ENCODE measurements at regions of chrX and their contacts with region 1.

Region 1: GRCh38 chrX:75273483-75273882 is 402 bp upstream of the UPRT start:
- DNase-seq: no peak
- ATAC-seq: no peak
- H3K4me3 Mint-ChIP-seq: peak overlapping the region; percentile 95
- H3K27ac Mint-ChIP-seq: peak overlapping the region; percentile 97
- H3K4me1 Mint-ChIP-seq: peaks cover 26% of the 10 kb centered on the region
- H3K27me3 Mint-ChIP-seq: no peaks in the 10 kb centered on the region

Region 2: DNA sequence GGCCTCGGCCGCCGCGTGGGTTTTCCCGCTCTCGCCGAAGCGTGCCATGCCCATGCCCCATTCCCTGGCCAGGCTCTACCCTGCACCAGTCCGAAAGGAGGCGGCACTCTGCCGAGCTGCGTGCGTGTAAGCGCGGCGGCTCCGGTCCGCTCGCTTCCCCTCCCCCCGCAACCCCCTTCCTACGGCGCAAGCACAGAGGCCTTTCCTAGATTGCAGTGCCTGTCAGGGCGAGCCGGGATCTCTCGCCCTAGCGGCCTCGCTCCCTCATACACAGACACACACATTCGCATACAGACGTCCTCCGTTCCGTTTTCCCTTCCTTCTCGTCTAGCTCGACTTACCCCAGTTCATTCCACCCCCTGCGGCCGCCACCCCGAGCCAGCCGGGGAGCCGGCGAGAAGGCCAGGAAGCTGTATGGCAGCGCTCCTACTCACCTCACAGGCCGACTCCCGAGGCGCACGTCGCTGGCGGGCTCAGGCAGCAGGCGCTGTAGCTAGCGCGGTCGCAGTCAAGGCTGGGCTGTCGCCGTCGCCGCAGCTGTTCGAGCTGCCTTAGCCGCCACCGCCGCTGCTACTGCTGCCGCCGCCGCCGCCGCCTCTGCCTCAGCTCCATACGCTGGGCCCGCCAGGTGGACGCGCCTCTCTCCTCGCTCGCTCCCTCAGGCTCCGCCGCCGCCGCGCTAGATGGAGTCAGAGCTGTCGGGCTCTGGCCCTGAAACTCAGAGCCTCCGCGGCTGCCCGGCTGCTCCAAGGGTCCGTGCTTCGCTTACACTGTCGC is 348.8 kb before region 1 on chrX:
- CTCF ChIA-PET with region 1: no interaction called
- POLR2A ChIA-PET with region 1: no interaction called
- intact Hi-C with region 1: loop called in 1 of 2 experiments (anchors 10 kb)
- DNase-seq: peak; percentile 60
- ATAC-seq: peak; percentile 72
- H3K4me3 Mint-ChIP-seq: peak overlapping the region; percentile 70
- H3K27ac Mint-ChIP-seq: peak overlapping the region; percentile 40
- H3K4me1 Mint-ChIP-seq: peaks cover 6% of the 10 kb centered on the region
- H3K27me3 Mint-ChIP-seq: peaks cover 15% of the 10 kb centered on the region

Region 3: GRCh38 chrX:75067931-75068330 is 205.6 kb before region 1 on chrX:
- CTCF ChIA-PET with region 1: no interaction called
- POLR2A ChIA-PET with region 1: no interaction called
- intact Hi-C with region 1: loop called in 1 of 2 experiments (anchors 10 kb)
- DNase-seq: no peak
- ATAC-seq: peak; percentile 57
- H3K4me3 Mint-ChIP-seq: no peak overlapping the region
- H3K27ac Mint-ChIP-seq: no peak overlapping the region
- H3K4me1 Mint-ChIP-seq: peaks cover 4% of the 10 kb centered on the region
- H3K27me3 Mint-ChIP-seq: no peaks in the 10 kb centered on the region

Region 4: DNA sequence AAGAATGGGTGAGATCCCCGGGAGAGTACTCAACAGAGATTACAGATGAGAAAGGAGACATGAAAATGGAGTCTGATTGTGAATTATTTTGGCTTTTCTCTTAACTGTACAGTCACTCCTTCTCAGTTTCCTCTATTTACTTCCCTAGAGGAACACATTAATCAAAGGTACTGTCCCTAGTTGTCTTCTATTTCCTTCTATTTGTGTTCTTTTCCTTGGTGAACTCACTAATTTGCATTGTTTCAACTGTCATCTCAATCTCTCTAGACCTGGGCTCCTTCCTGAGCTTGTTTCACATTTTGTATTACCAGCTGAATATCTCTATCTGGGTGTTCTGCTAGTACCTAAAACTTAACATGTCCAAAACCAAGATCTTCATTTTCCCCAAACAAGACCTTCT is 177.2 kb before region 1 on chrX:
- CTCF ChIA-PET with region 1: no interaction called
- POLR2A ChIA-PET with region 1: no interaction called
- intact Hi-C with region 1: loop called in 1 of 2 experiments (anchors 1 kb)
- DNase-seq: no peak
- ATAC-seq: peak; percentile 74
- H3K4me3 Mint-ChIP-seq: no peak overlapping the region
- H3K27ac Mint-ChIP-seq: peak overlapping the region; percentile 35
- H3K4me1 Mint-ChIP-seq: peaks cover 17% of the 10 kb centered on the region
- H3K27me3 Mint-ChIP-seq: no peaks in the 10 kb centered on the region

Region 5: GRCh38 chrX:76148753-76149152 is 875.3 kb after region 1 on chrX:
- CTCF ChIA-PET with region 1: no interaction called
- POLR2A ChIA-PET with region 1: no interaction called
- intact Hi-C with region 1: loop called in 1 of 2 experiments (anchors 10 kb)
- DNase-seq: peak; percentile 62
- ATAC-seq: peak; percentile 34
- H3K4me3 Mint-ChIP-seq: peak overlapping the region; percentile 73
- H3K27ac Mint-ChIP-seq: peak overlapping the region; percentile 99
- H3K4me1 Mint-ChIP-seq: peaks cover 13% of the 10 kb centered on the region
- H3K27me3 Mint-ChIP-seq: no peaks in the 10 kb centered on the region

Region 6: GRCh38 chrX:76172325-76172893 is 898.9 kb after region 1 on chrX:
- CTCF ChIA-PET with region 1: no interaction called
- POLR2A ChIA-PET with region 1: interaction called, 4 read pairs
- intact Hi-C with region 1: loop called in 1 of 2 experiments (anchors 5 kb)
- DNase-seq: no peak
- ATAC-seq: peak; percentile 70
- H3K4me3 Mint-ChIP-seq: peak overlapping the region; percentile 87
- H3K27ac Mint-ChIP-seq: peak overlapping the region; percentile 97
- H3K4me1 Mint-ChIP-seq: peaks cover 49% of the 10 kb centered on the region
- H3K27me3 Mint-ChIP-seq: no peaks in the 10 kb centered on the region

Measured in activated CD4-positive, alpha-beta T cell treated with anti-CD3 and anti-CD28 coated beads for 36 hours (primary cell).